ENCODE measurements at regions of chr3 and their contacts with region 1.

Region 1: GRCh38 chr3:50245831-50246516 is 10.0 kb downstream of the GNAI2 start:
- DNase-seq: peak; percentile 98
- ATAC-seq: peak; percentile 73
- H3K4me3 Mint-ChIP-seq: peak overlapping the region; percentile 40
- H3K27ac Mint-ChIP-seq: peak overlapping the region; percentile 91
- H3K4me1 Mint-ChIP-seq: peaks cover 59% of the 10 kb centered on the region
- H3K27me3 Mint-ChIP-seq: no peaks in the 10 kb centered on the region
- CTCF ChIP-seq: peak; percentile 99

Region 2: GRCh38 chr3:50205414-50206276 is 40.3 kb before region 1 on chr3:
- CTCF ChIA-PET with region 1: interaction called, 32 read pairs
- POLR2A ChIA-PET with region 1: no interaction called
- DNase-seq: peak; percentile 87
- ATAC-seq: peak; percentile 70
- H3K4me3 Mint-ChIP-seq: peak overlapping the region; percentile 67
- H3K27ac Mint-ChIP-seq: no peak overlapping the region
- H3K4me1 Mint-ChIP-seq: peaks cover under 1% of the 10 kb centered on the region; the same call in 1 of the 2 replicates
- H3K27me3 Mint-ChIP-seq: peaks cover 38% of the 10 kb centered on the region
- CTCF ChIP-seq: no peak

Region 3: GRCh38 chr3:50221411-50222168 is 24.4 kb before region 1 on chr3:
- CTCF ChIA-PET with region 1: interaction called, 154 read pairs
- POLR2A ChIA-PET with region 1: interaction called, 22 read pairs
- DNase-seq: peak; percentile 78
- ATAC-seq: peak; percentile 84
- H3K4me3 Mint-ChIP-seq: no peak overlapping the region
- H3K27ac Mint-ChIP-seq: no peak overlapping the region; the same call in 1 of the 2 replicates
- H3K4me1 Mint-ChIP-seq: peaks cover 9% of the 10 kb centered on the region
- H3K27me3 Mint-ChIP-seq: peaks cover under 1% of the 10 kb centered on the region
- CTCF ChIP-seq: no peak; the same call in 1 of the 2 replicates

Region 4: DNA sequence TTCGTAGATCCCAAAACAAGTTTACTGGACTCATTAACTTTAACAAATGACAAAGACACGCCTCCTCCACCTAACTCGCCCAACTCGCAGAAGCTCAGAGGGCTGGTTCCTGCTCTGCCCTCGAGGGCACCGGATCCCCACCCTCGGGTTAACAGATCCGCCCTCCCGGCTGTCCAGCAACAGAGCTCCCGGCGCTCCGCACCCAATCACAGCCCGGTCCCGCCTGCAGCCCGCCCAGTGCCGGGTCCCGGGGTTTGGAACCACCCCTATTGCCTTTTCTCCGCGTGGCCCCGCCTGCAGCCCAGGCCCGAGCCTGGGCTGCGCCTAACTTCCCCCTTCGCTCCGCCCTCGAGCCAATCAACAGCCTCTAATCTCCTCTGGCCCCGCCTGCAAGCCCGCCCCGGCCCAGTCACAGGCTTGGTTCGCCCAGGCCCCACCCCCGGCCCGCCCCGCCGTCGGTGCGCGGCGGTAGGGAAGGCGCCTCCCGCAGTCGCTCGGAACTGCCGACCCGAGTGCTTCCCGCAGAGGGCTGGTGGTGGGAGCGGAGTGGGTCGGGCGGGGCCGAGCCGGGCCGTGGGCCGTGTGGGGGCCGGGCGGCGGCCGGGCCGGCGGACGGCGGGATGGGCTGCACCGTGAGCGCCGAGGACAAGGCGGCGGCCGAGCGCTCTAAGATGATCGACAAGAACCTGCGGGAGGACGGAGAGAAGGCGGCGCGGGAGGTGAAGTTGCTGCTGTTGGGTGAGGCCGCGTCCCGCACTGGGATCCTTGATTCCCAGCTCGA is 10.1 kb before region 1 on chr3 and contains the start of gene GNAI2:
- CTCF ChIA-PET with region 1: interaction called, 154 read pairs
- POLR2A ChIA-PET with region 1: interaction called, 5 read pairs
- DNase-seq: peak; percentile 99
- ATAC-seq: peak; percentile 94
- H3K4me3 Mint-ChIP-seq: peak within 1 kb of the TSS; percentile 97
- H3K27ac Mint-ChIP-seq: peak within 1 kb of the TSS; percentile 93
- H3K4me1 Mint-ChIP-seq: peaks cover 48% of the 10 kb centered on the region
- H3K27me3 Mint-ChIP-seq: no peaks in the 10 kb centered on the region
- CTCF ChIP-seq: no peak
- total RNA-seq, gene GNAI2: 181 to 185 TPM (median 185 TPM) in 3 replicates

Region 5: GRCh38 chr3:50272911-50273693 is 27.1 kb after region 1 on chr3:
- CTCF ChIA-PET with region 1: interaction called, 38 read pairs
- POLR2A ChIA-PET with region 1: interaction called, 4 read pairs
- DNase-seq: peak; percentile 94
- ATAC-seq: peak; percentile 37
- H3K4me3 Mint-ChIP-seq: peak overlapping the region; percentile 67
- H3K27ac Mint-ChIP-seq: no peak overlapping the region
- H3K4me1 Mint-ChIP-seq: peaks cover 38% of the 10 kb centered on the region
- H3K27me3 Mint-ChIP-seq: peaks cover 53% of the 10 kb centered on the region
- CTCF ChIP-seq: peak; percentile 97

Region 6: GRCh38 chr3:50337191-50337841 is 91.3 kb after region 1 on chr3:
- CTCF ChIA-PET with region 1: interaction called, 12 read pairs
- POLR2A ChIA-PET with region 1: no interaction called
- DNase-seq: peak; percentile 99
- ATAC-seq: peak; percentile 91
- H3K4me3 Mint-ChIP-seq: peak overlapping the region; percentile 95
- H3K27ac Mint-ChIP-seq: peak overlapping the region; percentile 98
- H3K4me1 Mint-ChIP-seq: peaks cover 33% of the 10 kb centered on the region
- H3K27me3 Mint-ChIP-seq: peaks cover 43% of the 10 kb centered on the region
- CTCF ChIP-seq: no peak